ENCODE measurements at regions of chr3 and their contacts with region 1.

Region 1: DNA sequence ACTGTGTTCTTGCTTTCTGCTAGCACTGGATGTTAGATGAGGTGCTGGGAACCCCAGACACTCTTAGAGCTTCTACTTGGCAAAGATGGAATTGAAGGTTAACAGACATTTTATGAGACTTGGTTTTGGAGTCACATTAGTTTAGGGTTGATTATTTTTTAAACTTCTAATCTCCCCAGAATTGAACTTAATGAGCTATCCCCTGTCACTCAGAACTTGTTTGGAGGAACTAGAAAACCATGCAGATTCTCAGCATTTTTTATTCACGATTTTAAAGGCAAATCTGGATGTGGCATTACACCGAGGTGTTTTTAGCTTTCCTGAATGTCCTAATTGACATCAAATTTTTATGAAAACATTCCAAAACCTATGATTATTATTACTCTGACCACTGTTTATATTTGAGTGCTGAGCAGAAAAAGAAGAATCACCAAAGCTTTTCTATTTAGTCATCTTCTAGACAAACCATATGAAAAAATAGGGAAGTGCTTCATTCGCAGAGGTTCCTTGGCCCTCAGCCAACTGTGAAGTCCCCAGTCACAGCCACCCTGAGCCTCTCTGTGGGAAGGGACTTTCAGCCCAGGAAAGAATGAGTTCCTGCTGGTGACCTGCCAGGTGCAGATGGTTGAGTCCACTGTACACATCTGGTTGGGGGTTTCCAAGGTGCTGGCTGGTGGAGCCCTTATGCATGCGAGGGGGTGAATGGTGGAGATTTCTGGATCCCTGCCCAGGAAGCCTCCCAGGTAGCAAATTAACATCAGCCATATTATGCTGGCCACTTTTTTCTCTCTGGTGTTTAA is 196.0 kb upstream of the TOPAZ1 start:
- DNase-seq: peak; percentile 94
- ATAC-seq: peak; percentile 95
- H3K4me3 ChIP-seq: peak overlapping the region in 1 of 5 experiments; percentile 5
- H3K4me3 Mint-ChIP-seq: peak overlapping the region; percentile 44
- H3K27ac ChIP-seq: peak overlapping the region; percentile 57 to 75
- H3K27ac Mint-ChIP-seq: peak overlapping the region; percentile 80
- H3K4me1 ChIP-seq: peaks cover 53 to 68% of the 10 kb centered on the region in 2 donors
- H3K4me1 Mint-ChIP-seq: peaks cover 61% of the 10 kb centered on the region
- H3K27me3 ChIP-seq: no peaks in the 10 kb centered on the region
- H3K27me3 Mint-ChIP-seq: no peaks in the 10 kb centered on the region
- CTCF ChIP-seq: no peak

Region 2: GRCh38 chr3:43998836-43999727 is 46.6 kb before region 1 on chr3:
- CTCF ChIA-PET with region 1: interaction called, 3 read pairs
- POLR2A ChIA-PET with region 1: no interaction called
- intact Hi-C with region 1: loop called (anchors 2 kb)
- DNase-seq: peak; percentile 63
- ATAC-seq: peak; percentile 57
- H3K4me3 ChIP-seq: peak overlapping the region in 4 of 5 experiments; percentile 37 to 74 (median 56)
- H3K4me3 Mint-ChIP-seq: peak overlapping the region; percentile 95
- H3K27ac ChIP-seq: no peak overlapping the region
- H3K27ac Mint-ChIP-seq: peak overlapping the region; percentile 67
- H3K4me1 ChIP-seq: peaks cover 50 to 54% of the 10 kb centered on the region in 2 donors
- H3K4me1 Mint-ChIP-seq: peaks cover 53% of the 10 kb centered on the region
- H3K27me3 ChIP-seq: peaks cover 0 to 62% (median 34%) of the 10 kb centered on the region in 4 experiments
- H3K27me3 Mint-ChIP-seq: peaks cover 57% of the 10 kb centered on the region
- CTCF ChIP-seq: no peak

Region 3: DNA sequence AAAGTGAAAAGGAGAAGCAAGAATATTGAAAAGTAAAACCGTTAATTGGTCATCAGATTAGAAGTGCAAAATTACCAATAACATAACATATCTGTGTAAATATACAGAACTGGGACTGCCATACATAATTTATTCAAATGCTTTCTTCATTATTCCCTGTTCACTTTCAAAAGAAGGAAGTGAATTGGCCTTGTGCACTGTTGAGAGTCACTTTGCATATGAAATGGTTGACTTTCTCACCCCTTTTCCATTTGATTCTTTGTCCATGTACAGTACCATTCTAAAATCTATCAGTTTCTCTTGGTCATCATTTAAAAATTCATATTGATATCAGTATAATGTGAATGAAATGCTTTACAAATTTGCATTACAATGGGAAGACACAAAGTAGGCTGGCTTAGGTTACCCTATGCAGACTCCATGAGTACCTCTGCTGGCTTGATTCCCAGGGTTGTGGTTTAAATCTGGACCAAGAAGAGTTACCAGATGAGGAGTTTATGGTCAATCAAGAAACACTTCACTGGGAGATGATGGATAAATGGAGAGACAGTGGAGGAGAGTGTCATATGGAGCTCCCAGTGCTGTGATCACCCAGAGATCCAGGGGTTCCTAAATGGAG is 14.9 kb before region 1 on chr3:
- CTCF ChIA-PET with region 1: no interaction called
- POLR2A ChIA-PET with region 1: no interaction called
- intact Hi-C with region 1: no loop called
- DNase-seq: no peak
- ATAC-seq: no peak
- H3K4me3 ChIP-seq: no peak overlapping the region
- H3K4me3 Mint-ChIP-seq: no peak overlapping the region
- H3K27ac ChIP-seq: no peak overlapping the region
- H3K27ac Mint-ChIP-seq: no peak overlapping the region
- H3K4me1 ChIP-seq: peaks cover 4 to 5% of the 10 kb centered on the region in 2 donors
- H3K4me1 Mint-ChIP-seq: peaks cover 9% of the 10 kb centered on the region
- H3K27me3 ChIP-seq: peaks cover 0 to 9% (median 2%) of the 10 kb centered on the region in 4 experiments
- H3K27me3 Mint-ChIP-seq: peaks cover 14% of the 10 kb centered on the region
- CTCF ChIP-seq: no peak

Region 4: GRCh38 chr3:44058022-44058867 is 12.6 kb after region 1 on chr3:
- CTCF ChIA-PET with region 1: interaction called, 10 read pairs
- POLR2A ChIA-PET with region 1: interaction called, 3 read pairs
- intact Hi-C with region 1: loop called (anchors 1 kb)
- DNase-seq: peak; percentile 84
- ATAC-seq: peak; percentile 94
- H3K4me3 ChIP-seq: peak overlapping the region in 2 of 5 experiments; percentile 13 to 21
- H3K4me3 Mint-ChIP-seq: peak overlapping the region; percentile 80
- H3K27ac ChIP-seq: peak overlapping the region; percentile 42 to 54
- H3K27ac Mint-ChIP-seq: peak overlapping the region; percentile 91
- H3K4me1 ChIP-seq: peaks cover 23 to 27% of the 10 kb centered on the region in 2 donors
- H3K4me1 Mint-ChIP-seq: peaks cover 33% of the 10 kb centered on the region
- H3K27me3 ChIP-seq: peaks cover 0 to 3% (median 0%) of the 10 kb centered on the region in 4 experiments
- H3K27me3 Mint-ChIP-seq: peaks cover 4% of the 10 kb centered on the region
- CTCF ChIP-seq: no peak